ENCODE measurements at regions of chr5 and their contacts with region 1.

Region 1: GRCh38 chr5:141636413-141637122 is at the starts of genes HDAC3 and RELL2:
- DNase-seq: peak; percentile 94
- ATAC-seq: peak; percentile 88
- H3K4me3 Mint-ChIP-seq: peak within 1 kb of the TSS; percentile 86
- H3K27ac Mint-ChIP-seq: peak within 1 kb of the TSS; percentile 90
- H3K4me1 Mint-ChIP-seq: peaks cover 47% of the 10 kb centered on the region
- H3K27me3 Mint-ChIP-seq: no peaks in the 10 kb centered on the region
- CTCF ChIP-seq: no peak
- total RNA-seq, gene HDAC3: 94.8 to 98.3 TPM
- total RNA-seq, gene RELL2: 31.4 to 35.6 TPM

Region 2: GRCh38 chr5:141590127-141590526 is 46.4 kb before region 1 on chr5:
- CTCF ChIA-PET with region 1: interaction called, 83 read pairs
- POLR2A ChIA-PET with region 1: interaction called, 28 read pairs
- intact Hi-C with region 1: loop called (anchors 5 kb)
- DNase-seq: no peak
- ATAC-seq: no peak
- H3K4me3 Mint-ChIP-seq: no peak overlapping the region
- H3K27ac Mint-ChIP-seq: no peak overlapping the region
- H3K4me1 Mint-ChIP-seq: peaks cover 43% of the 10 kb centered on the region
- H3K27me3 Mint-ChIP-seq: no peaks in the 10 kb centered on the region
- CTCF ChIP-seq: no peak

Region 3: DNA sequence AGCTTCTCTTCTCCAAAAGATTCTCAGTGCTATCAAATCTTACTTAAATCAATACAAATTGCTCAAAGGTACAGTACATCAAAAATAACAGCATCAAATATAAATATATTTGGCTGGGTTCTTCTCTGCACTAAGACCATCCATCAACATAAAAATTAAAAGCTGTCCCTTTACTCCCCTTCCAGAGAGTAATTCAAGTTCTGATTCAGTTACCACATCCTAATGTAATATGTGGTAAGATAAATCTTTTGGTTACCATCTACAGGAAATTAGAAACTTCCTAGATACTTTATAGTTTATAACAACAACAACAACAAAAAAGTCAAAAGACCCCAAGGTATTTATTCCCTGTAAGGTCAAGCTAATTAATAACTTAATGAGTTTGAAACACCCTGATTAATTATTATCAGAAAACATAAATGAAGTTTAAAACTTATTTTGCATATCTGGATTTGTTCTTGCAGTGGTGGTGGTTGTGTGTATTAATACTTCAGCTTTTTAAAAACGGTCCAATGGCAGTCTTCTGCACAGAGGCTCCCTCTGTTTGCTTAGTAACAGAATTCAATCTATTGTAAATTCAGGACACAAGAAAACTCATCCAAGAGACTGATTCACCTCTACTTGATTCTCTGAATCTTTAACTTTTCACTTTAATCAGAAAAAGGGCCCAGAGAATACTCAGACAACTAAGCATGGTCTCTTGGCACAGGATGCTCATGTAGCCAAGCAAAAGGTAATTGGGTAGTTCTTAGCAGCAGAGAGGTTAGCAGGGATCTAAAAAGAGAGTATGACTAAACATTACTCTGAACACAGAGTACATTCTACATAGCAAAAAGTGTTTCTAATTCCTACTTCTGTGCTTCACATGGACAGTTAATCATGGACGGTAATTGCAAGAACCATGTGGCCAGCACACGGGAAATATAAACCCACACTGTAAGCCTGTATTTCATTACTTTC is 37.9 kb before region 1 on chr5:
- CTCF ChIA-PET with region 1: interaction called, 83 read pairs
- POLR2A ChIA-PET with region 1: interaction called, 28 read pairs
- intact Hi-C with region 1: loop called (anchors 5 kb)
- DNase-seq: no peak
- ATAC-seq: peak; percentile 88
- H3K4me3 Mint-ChIP-seq: no peak overlapping the region
- H3K27ac Mint-ChIP-seq: peak overlapping the region; percentile 71
- H3K4me1 Mint-ChIP-seq: peaks cover 72% of the 10 kb centered on the region
- H3K27me3 Mint-ChIP-seq: no peaks in the 10 kb centered on the region
- CTCF ChIP-seq: no peak

Region 4: GRCh38 chr5:141618804-141619554 is 17.6 kb before region 1 on chr5 and contains the start of gene DIAPH1:
- CTCF ChIA-PET with region 1: interaction called, 73 read pairs
- POLR2A ChIA-PET with region 1: interaction called, 30 read pairs
- intact Hi-C with region 1: no loop called
- DNase-seq: peak; percentile 99
- ATAC-seq: peak; percentile 90
- H3K4me3 Mint-ChIP-seq: peak within 1 kb of the TSS; percentile 99
- H3K27ac Mint-ChIP-seq: peak within 1 kb of the TSS; percentile 96
- H3K4me1 Mint-ChIP-seq: peaks cover 55% of the 10 kb centered on the region
- H3K27me3 Mint-ChIP-seq: no peaks in the 10 kb centered on the region
- CTCF ChIP-seq: peak; percentile 92
- total RNA-seq, gene DIAPH1: 209 to 218 TPM

Region 5: GRCh38 chr5:141650851-141651727 is 14.5 kb after region 1 on chr5 and contains the start of gene FCHSD1:
- CTCF ChIA-PET with region 1: interaction called, 15 read pairs
- POLR2A ChIA-PET with region 1: interaction called, 27 read pairs
- intact Hi-C with region 1: no loop called
- DNase-seq: peak; percentile 88
- ATAC-seq: peak; percentile 97
- H3K4me3 Mint-ChIP-seq: peak within 1 kb of the TSS; percentile 93
- H3K27ac Mint-ChIP-seq: peak within 1 kb of the TSS; percentile 95
- H3K4me1 Mint-ChIP-seq: peaks cover 36% of the 10 kb centered on the region
- H3K27me3 Mint-ChIP-seq: no peaks in the 10 kb centered on the region
- CTCF ChIP-seq: no peak
- total RNA-seq, gene FCHSD1: 30.1 to 31.8 TPM

Region 6: GRCh38 chr5:141757402-141757801 is 120.8 kb after region 1 on chr5:
- CTCF ChIA-PET with region 1: no interaction called
- POLR2A ChIA-PET with region 1: no interaction called
- intact Hi-C with region 1: no loop called
- DNase-seq: no peak
- ATAC-seq: no peak
- H3K4me3 Mint-ChIP-seq: no peak overlapping the region
- H3K27ac Mint-ChIP-seq: no peak overlapping the region
- H3K4me1 Mint-ChIP-seq: no peaks in the 10 kb centered on the region
- H3K27me3 Mint-ChIP-seq: peaks cover 44% of the 10 kb centered on the region
- CTCF ChIP-seq: no peak

Measured in activated CD8-positive, alpha-beta T cell treated with anti-CD3 and anti-CD28 coated beads for 36 hours (primary cell).